ENCODE measurements at regions of chr21 and their contacts with region 1.

Region 1: DNA sequence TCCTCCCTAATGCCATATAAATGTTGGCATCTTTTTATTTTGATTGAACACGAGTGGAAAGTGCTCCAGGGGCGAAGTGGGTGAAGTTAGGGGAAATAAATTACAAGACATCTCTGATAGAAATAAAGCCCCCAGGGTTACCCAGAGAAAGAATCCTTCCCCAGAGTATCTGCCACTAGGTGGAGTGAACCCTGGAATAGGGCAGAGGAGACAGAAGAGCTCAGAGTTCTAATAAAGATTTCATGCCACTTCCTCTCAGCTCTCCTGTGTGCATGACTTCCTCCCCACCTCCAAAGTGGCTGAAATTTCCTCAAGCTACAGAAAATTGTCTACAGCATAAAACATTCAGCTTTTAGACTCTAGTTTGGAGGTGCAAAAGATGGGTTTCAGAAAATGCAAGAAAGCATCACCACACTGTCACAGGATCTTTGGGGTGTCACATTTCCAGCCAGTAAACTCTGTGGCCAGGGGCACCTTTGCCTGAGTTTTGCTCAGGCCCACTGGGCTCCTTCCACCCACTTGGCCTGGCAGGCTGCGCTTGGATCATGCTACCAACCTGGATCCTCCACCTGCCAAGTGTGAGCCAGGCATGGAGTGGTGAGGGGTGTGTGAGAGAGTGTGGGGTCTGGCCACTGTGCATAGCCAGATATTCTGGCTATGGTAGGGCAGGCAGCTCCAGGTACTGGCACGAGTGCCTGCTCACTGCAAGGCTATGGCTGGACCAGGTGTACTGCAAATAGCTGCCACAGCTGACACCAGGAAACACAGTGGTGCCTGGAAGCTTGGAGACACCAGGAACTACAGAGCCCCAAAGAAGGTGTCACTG is 208.8 kb upstream of the USP25 start:
- DNase-seq: peak in 4 of 5 donors; percentile 3 to 21 (median 15)
- H3K4me3 ChIP-seq: no peak overlapping the region
- H3K4me3 Mint-ChIP-seq: peak overlapping the region in 2 of 8 donors; percentile 45 to 58
- H3K27ac ChIP-seq: no peak overlapping the region
- H3K27ac Mint-ChIP-seq: peak overlapping the region in 3 of 7 donors; percentile 17 to 56 (median 22)
- H3K4me1 ChIP-seq: peaks cover 18% of the 10 kb centered on the region
- H3K4me1 Mint-ChIP-seq: peaks cover 10 to 22% (median 16%) of the 10 kb centered on the region in 4 donors
- H3K27me3 ChIP-seq: no peaks in the 10 kb centered on the region
- H3K27me3 Mint-ChIP-seq: no peaks in the 10 kb centered on the region

Region 2: GRCh38 chr21:15343066-15343465 is 178.0 kb before region 1 on chr21:
- CTCF ChIA-PET with region 1: no interaction called
- POLR2A ChIA-PET with region 1: no interaction called
- intact Hi-C with region 1: no loop called
- DNase-seq: no peak
- H3K4me3 ChIP-seq: no peak overlapping the region
- H3K4me3 Mint-ChIP-seq: no peak overlapping the region
- H3K27ac ChIP-seq: no peak overlapping the region
- H3K27ac Mint-ChIP-seq: no peak overlapping the region
- H3K4me1 ChIP-seq: no peaks in the 10 kb centered on the region
- H3K4me1 Mint-ChIP-seq: peaks cover 0 to 3% (median 0%) of the 10 kb centered on the region in 4 donors
- H3K27me3 ChIP-seq: no peaks in the 10 kb centered on the region
- H3K27me3 Mint-ChIP-seq: peaks cover 8 to 11% of the 10 kb centered on the region in 2 donors

Region 3: DNA sequence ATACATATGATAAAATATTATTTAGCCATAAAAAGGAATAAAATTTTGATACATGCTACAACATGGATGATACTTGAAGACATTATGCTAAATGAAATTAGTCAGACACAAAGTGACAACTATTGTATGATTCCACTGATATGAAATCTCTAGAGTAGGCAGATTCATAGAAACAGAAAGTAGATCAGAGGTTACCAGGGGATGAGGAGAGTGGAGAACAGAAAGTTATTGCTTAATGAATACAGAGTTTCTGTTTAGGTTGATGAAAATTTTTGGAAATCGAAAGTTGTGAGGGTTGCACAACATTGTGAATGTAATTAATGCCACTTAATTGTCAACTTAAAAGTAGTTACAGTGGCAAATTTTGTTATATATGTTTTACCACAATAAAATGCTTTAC is 107.0 kb before region 1 on chr21:
- CTCF ChIA-PET with region 1: no interaction called
- POLR2A ChIA-PET with region 1: no interaction called
- intact Hi-C with region 1: no loop called
- DNase-seq: no peak
- H3K4me3 ChIP-seq: no peak overlapping the region
- H3K4me3 Mint-ChIP-seq: no peak overlapping the region
- H3K27ac ChIP-seq: no peak overlapping the region
- H3K27ac Mint-ChIP-seq: no peak overlapping the region
- H3K4me1 ChIP-seq: no peaks in the 10 kb centered on the region
- H3K4me1 Mint-ChIP-seq: no peaks in the 10 kb centered on the region
- H3K27me3 ChIP-seq: no peaks in the 10 kb centered on the region
- H3K27me3 Mint-ChIP-seq: no peaks in the 10 kb centered on the region

Region 4: GRCh38 chr21:15508554-15508953 is 12.5 kb before region 1 on chr21:
- CTCF ChIA-PET with region 1: interaction called, 12 read pairs
- POLR2A ChIA-PET with region 1: no interaction called
- intact Hi-C with region 1: no loop called
- DNase-seq: no peak
- H3K4me3 ChIP-seq: no peak overlapping the region
- H3K4me3 Mint-ChIP-seq: no peak overlapping the region
- H3K27ac ChIP-seq: no peak overlapping the region
- H3K27ac Mint-ChIP-seq: no peak overlapping the region
- H3K4me1 ChIP-seq: peaks cover 8% of the 10 kb centered on the region
- H3K4me1 Mint-ChIP-seq: peaks cover under 1 to 5% (median 2%) of the 10 kb centered on the region in 4 donors
- H3K27me3 ChIP-seq: no peaks in the 10 kb centered on the region
- H3K27me3 Mint-ChIP-seq: no peaks in the 10 kb centered on the region

Region 5: GRCh38 chr21:15531974-15532373 is 10.9 kb after region 1 on chr21:
- CTCF ChIA-PET with region 1: interaction called, 12 read pairs
- POLR2A ChIA-PET with region 1: no interaction called
- intact Hi-C with region 1: no loop called
- DNase-seq: no peak
- H3K4me3 ChIP-seq: no peak overlapping the region
- H3K4me3 Mint-ChIP-seq: no peak overlapping the region
- H3K27ac ChIP-seq: no peak overlapping the region
- H3K27ac Mint-ChIP-seq: no peak overlapping the region
- H3K4me1 ChIP-seq: peaks cover 2% of the 10 kb centered on the region
- H3K4me1 Mint-ChIP-seq: peaks cover 1 to 4% (median 3%) of the 10 kb centered on the region in 4 donors
- H3K27me3 ChIP-seq: no peaks in the 10 kb centered on the region
- H3K27me3 Mint-ChIP-seq: peaks cover 6 to 10% of the 10 kb centered on the region in 2 donors

Measured in CD4-positive, alpha-beta memory T cell (primary cell).